Caco-2 (cell line): ENCODE measurements at regions of chr15 and their contacts with region 1.

Region 1: DNA sequence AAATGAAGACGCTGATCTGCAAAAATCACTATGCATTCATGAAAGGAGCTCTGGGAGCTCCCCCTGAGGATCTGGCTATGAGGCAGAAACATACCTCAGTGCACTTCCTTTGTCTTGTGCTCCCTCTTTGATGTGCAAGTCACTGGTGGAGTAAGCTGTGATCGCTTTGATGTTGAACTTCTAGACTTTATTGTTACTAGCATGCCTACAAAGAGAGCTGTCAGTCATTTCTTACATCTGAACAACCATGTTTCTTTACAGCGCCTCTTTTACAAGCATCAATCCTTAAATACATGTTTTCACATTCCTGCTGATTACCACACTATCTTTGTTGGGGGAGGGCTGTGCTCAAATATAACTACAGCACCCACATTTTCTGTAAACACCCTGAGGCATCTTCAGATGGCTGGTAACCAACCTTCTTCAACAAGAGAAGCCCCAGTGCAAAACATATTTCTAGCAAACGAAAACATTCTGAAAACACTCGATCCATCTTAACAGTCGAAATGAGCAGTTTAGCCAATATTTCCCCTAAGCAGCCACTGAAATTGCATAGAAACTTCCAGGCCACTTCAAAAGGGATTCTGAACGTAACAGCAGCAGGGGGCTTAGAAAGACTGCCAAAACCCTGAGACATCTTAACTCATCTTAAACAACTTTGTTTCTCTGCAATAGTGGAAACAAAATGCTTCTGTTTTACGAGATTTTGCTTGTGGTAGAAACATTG is 101.9 kb upstream of the ICE2 start:
- DNase-seq: peak; percentile 59 to 63
- H3K4me3 ChIP-seq: no peak overlapping the region
- H3K4me3 Mint-ChIP-seq: peak overlapping the region; percentile 10
- H3K27ac Mint-ChIP-seq: peak overlapping the region; percentile 3
- H3K4me1 ChIP-seq: peaks cover 42% of the 10 kb centered on the region
- H3K4me1 Mint-ChIP-seq: peaks cover 39% of the 10 kb centered on the region
- H3K27me3 ChIP-seq: no peaks in the 10 kb centered on the region
- H3K27me3 Mint-ChIP-seq: no peaks in the 10 kb centered on the region
- CTCF ChIP-seq: no peak

Region 2: DNA sequence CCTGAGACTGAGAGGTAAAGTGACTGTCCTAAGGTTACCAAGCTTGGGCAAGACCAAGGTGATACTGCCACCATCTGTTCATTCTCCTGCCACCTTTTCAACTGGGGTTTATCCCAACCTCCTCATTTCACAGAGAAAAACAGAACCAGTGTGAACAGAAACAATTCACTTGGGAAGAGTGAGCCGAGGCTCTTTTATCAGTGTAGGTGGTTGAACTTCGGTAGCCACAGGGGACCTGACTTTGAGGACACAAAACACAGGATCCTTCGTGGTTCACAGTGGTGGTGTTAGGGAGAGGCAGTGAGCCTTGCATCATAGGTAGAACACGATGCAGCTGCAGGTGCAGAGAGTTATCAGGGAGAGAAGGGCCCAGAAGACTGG is 29.0 kb before region 1 on chr15:
- CTCF ChIA-PET with region 1: no interaction called
- POLR2A ChIA-PET with region 1: no interaction called
- intact Hi-C with region 1: loop called (anchors 1 kb)
- DNase-seq: peak; percentile 59 to 60
- H3K4me3 ChIP-seq: no peak overlapping the region
- H3K4me3 Mint-ChIP-seq: peak overlapping the region; percentile 60
- H3K27ac Mint-ChIP-seq: peak overlapping the region; percentile 93
- H3K4me1 ChIP-seq: peaks cover 37% of the 10 kb centered on the region
- H3K4me1 Mint-ChIP-seq: peaks cover 42% of the 10 kb centered on the region
- H3K27me3 ChIP-seq: no peaks in the 10 kb centered on the region
- H3K27me3 Mint-ChIP-seq: no peaks in the 10 kb centered on the region
- CTCF ChIP-seq: peak in 1 of 2 experiments; percentile 25

Region 3: GRCh38 chr15:60672400-60672799 is 91.6 kb after region 1 on chr15:
- CTCF ChIA-PET with region 1: no interaction called
- POLR2A ChIA-PET with region 1: no interaction called
- intact Hi-C with region 1: no loop called
- DNase-seq: no peak
- H3K4me3 ChIP-seq: no peak overlapping the region
- H3K4me3 Mint-ChIP-seq: no peak overlapping the region
- H3K27ac Mint-ChIP-seq: no peak overlapping the region
- H3K4me1 ChIP-seq: no peaks in the 10 kb centered on the region
- H3K4me1 Mint-ChIP-seq: no peaks in the 10 kb centered on the region
- H3K27me3 ChIP-seq: no peaks in the 10 kb centered on the region
- H3K27me3 Mint-ChIP-seq: peaks cover 21% of the 10 kb centered on the region
- CTCF ChIP-seq: no peak